ENCODE measurements at regions of chr12 and their contacts with region 1.

Region 1: GRCh38 chr12:27652174-27652763 is 44.0 kb upstream of the REP15 start:
- DNase-seq: no peak
- ATAC-seq: peak; percentile 87

Region 2: DNA sequence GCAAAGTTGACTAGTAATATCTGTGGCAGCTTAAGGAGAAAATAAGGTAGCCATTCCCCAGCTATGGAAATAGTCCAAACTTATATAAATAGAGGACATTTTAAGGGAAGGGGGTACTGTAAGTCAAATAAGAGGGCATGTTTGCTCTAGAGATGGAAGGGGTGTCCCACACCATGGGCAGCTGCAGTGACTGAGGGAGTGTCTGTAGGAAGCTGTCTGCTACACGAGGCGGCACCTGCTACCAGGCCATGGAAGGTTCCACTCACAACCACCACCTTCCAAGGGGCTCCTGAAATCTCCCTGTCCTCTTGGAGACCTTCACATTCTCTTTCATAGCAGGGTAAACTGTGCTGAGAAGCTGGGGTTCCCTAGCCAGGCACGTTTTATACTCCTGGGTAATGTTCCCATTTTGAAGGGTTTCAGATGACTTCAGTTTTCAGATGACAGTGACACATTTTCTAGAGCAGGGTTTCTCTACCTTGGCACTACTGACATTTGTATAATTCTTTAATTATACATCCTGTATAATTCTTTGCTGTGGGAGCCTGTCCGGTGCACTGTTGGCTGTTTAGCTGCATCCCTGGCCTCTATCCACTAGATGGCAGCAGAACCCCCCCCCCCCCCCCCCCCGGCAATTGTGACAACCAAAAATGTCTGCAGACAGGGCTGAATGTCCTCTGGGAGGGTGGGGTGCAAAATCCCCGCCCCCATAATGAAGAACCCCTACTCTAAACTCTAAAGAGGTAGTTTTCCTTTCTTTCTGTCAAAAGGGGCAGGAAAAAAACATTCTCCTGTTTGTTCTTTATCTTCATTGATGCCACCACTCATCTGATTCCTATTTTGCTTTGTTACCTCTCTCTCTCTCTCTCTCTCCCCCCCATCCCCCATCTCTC is 217.3 kb before region 1 on chr12:
- intact Hi-C with region 1: loop called (anchors 5 kb)
- DNase-seq: peak; percentile 29
- ATAC-seq: peak; percentile 63